Spleen (tissue), 13 donors: ENCODE measurements at regions of chr19 and their contacts with region 1.

Region 1: GRCh38 chr19:6911516-6911915 is 24.1 kb downstream of the ADGRE1 start:
- DNase-seq: no peak
- H3K4me3 ChIP-seq: no peak overlapping the region
- H3K27ac ChIP-seq: no peak overlapping the region
- H3K4me1 ChIP-seq: no peaks in the 10 kb centered on the region
- H3K27me3 ChIP-seq: no peaks in the 10 kb centered on the region
- CTCF ChIP-seq: no peak
- POLR2A ChIP-seq: no peak

Region 2: GRCh38 chr19:6987850-6988249 is 76.3 kb after region 1 on chr19:
- intact Hi-C with region 1: loop called (anchors 10 kb)
- DNase-seq: no peak
- H3K4me3 ChIP-seq: no peak overlapping the region
- H3K27ac ChIP-seq: peak overlapping the region in 3 of 8 donors; percentile 12 to 52 (median 48)
- H3K4me1 ChIP-seq: no peaks in the 10 kb centered on the region
- H3K27me3 ChIP-seq: no peaks in the 10 kb centered on the region
- CTCF ChIP-seq: no peak
- POLR2A ChIP-seq: no peak

Region 3: GRCh38 chr19:7069042-7069903 is 157.8 kb after region 1 on chr19 and contains the start of gene ZNF557:
- intact Hi-C with region 1: no loop called
- DNase-seq: peak; percentile 100
- H3K4me3 ChIP-seq: peak within 1 kb of the TSS; percentile 85 to 100 (median 98)
- H3K27ac ChIP-seq: peak within 1 kb of the TSS; percentile 89 to 97 (median 92)
- H3K4me1 ChIP-seq: peaks cover 6 to 24% (median 16%) of the 10 kb centered on the region in 6 donors
- H3K27me3 ChIP-seq: no peaks in the 10 kb centered on the region
- CTCF ChIP-seq: peak in 1 of 11 experiments; percentile 15
- POLR2A ChIP-seq: peak in 1 of 3 donors; percentile 45
- total RNA-seq, gene ZNF557: 12.0 to 20.8 (median 15.1) TPM